ENCODE measurements at regions of chr19 and their contacts with region 1.

Region 1: GRCh38 chr19:41353466-41354342 is at the start of gene TGFB1:
- DNase-seq: peak; percentile 89 to 98 (median 94)
- ATAC-seq: peak; percentile 60
- H3K4me3 ChIP-seq: peak within 1 kb of the TSS; percentile 99
- H3K4me3 Mint-ChIP-seq: peak within 1 kb of the TSS; percentile 94
- H3K27ac ChIP-seq: peak within 1 kb of the TSS; percentile 82 to 94
- H3K27ac Mint-ChIP-seq: peak within 1 kb of the TSS; percentile 93
- H3K4me1 ChIP-seq: peaks cover 72% of the 10 kb centered on the region
- H3K4me1 Mint-ChIP-seq: peaks cover 81% of the 10 kb centered on the region
- H3K27me3 ChIP-seq: no peaks in the 10 kb centered on the region
- H3K27me3 Mint-ChIP-seq: no peaks in the 10 kb centered on the region
- CTCF ChIP-seq: peak; percentile 80
- total RNA-seq, gene TGFB1: 406 to 416 TPM

Region 2: DNA sequence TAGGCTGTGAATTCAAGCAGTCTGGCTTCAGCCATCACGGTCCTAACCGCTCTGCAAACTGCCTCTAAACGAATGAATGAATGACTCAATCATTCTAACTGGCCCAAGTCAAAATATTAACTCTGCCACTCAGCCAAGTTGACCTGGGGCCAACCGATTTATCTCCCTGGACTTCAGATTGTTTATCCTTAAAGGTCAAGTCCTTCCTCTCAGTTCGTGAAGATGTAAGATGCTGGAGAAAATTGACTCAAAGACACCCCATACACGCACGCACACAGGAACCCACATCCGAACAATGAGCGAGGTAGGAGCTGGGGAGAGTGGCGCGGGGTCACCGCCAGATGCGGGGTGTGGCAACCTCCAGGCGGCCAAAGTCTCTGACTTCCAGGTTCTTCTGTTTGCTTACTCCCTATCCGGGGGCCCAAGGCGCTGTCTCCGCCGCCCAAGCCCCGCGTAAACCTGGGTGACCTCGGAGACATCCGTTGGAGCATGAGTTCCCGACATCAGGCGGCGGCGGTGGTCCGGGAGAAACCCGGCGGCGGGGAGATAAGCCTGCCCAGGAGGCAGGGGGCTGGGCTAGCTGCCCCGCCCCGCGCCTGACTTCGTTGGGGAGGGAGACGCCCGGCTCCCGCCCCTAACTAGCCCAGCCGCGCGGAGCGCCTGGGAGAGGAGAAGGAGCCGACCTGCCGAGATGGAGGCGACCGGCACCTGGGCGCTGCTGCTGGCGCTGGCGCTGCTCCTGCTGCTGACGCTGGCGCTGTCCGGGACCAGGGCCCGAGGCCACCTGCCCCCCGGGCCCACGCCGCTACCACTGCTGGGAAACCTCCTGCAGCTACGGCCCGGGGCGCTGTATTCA is 160.9 kb before region 1 on chr19 and contains the start of gene CYP2S1:
- CTCF ChIA-PET with region 1: no interaction called
- POLR2A ChIA-PET with region 1: no interaction called
- intact Hi-C with region 1: no loop called
- DNase-seq: peak in 6 of 14 experiments; percentile 4 to 46 (median 24)
- ATAC-seq: peak; percentile 55
- H3K4me3 ChIP-seq: peak within 1 kb of the TSS; percentile 16
- H3K4me3 Mint-ChIP-seq: peak within 1 kb of the TSS; percentile 61
- H3K27ac ChIP-seq: no peak within 1 kb of the TSS
- H3K27ac Mint-ChIP-seq: no peak within 1 kb of the TSS
- H3K4me1 ChIP-seq: peaks cover 21% of the 10 kb centered on the region
- H3K4me1 Mint-ChIP-seq: peaks cover 16% of the 10 kb centered on the region
- H3K27me3 ChIP-seq: peaks cover 27 to 28% of the 10 kb centered on the region in 2 experiments
- H3K27me3 Mint-ChIP-seq: peaks cover 48% of the 10 kb centered on the region
- CTCF ChIP-seq: no peak
- total RNA-seq, gene CYP2S1: 0.78 to 0.82 TPM

Region 3: DNA sequence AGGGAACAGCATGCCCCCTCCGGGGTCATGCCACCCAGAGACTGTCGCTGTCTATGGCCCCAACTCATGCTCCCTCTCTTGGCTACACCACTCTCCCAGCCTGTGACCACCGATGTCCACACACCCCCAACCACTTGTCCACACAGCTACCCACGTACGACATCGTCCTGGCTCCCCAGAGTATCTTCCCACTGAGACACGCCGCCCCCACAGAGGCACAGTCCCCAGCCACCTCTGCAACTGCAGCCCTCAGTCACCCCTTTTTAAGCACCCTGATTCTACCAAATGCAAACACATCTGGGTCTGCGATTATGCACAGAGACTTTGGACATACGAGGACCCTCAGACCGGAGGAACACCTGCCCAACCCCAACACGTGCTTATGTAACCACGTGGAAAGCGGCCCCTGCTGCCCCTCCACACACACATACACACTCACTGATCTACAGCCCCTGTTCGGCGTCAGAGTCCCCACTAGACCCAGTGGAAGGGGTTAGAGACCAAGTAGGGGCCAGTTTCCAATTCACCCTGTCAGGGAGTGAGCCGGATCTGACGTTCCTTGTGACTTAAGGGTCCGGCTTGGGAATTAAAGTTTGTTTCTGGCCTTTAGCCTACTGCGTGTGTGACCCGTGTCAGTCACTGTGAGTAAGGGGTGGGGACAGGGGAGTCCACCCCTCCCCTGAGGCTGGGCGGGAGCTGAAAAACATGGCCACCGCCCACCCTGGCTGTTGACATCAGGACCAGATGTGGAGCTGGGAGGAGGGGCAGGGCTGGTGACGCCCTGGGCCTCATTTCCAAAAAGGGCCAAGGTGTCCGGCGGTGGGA is 146.6 kb before region 1 on chr19:
- CTCF ChIA-PET with region 1: interaction called, 3 read pairs
- POLR2A ChIA-PET with region 1: interaction called, 3 read pairs
- intact Hi-C with region 1: loop called (anchors 1 to 5 kb)
- DNase-seq: no peak
- ATAC-seq: no peak
- H3K4me3 ChIP-seq: no peak overlapping the region
- H3K4me3 Mint-ChIP-seq: no peak overlapping the region
- H3K27ac ChIP-seq: no peak overlapping the region
- H3K27ac Mint-ChIP-seq: peak overlapping the region; percentile 39
- H3K4me1 ChIP-seq: peaks cover 9% of the 10 kb centered on the region
- H3K4me1 Mint-ChIP-seq: no peaks in the 10 kb centered on the region
- H3K27me3 ChIP-seq: no peaks in the 10 kb centered on the region
- H3K27me3 Mint-ChIP-seq: no peaks in the 10 kb centered on the region
- CTCF ChIP-seq: no peak

Region 4: DNA sequence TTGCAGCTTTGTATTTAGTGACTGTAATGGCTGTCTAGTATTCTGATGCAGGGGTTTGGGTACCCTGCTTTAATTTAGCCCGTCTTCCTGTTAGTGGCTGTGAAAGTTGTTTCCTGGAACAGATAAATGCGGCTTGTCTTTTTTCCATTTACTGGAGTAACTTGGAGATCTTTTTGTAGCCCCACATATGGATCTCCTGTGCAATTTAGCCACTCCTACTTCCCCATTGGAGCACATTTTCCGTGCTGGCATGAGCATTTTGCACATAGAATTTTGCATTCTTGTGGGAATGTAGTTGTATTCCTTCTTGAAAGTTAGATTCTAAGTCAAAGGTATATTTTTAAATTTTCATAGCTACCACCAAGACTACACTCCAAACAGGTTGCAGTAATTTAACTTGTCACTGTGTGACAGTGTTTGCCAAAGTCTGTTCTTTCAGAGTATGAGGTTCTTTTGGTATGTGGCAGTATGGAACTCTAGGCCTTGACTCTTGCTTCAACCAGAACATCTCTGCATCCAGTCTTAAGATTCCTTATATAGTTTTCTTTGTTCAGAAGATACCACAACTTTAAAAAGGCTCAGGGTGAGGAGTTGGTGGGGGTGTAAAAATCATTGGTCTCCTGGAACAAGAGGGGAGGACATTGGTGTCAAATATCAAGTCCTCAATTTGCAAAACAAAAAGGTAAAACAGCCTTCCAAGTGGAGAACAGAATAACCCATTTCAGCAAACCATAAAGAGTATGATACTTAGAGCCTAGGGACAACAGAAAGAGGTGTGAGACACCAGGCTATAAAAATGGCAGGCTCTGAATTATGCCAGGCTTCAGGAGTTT is 64.8 kb before region 1 on chr19:
- CTCF ChIA-PET with region 1: no interaction called
- POLR2A ChIA-PET with region 1: no interaction called
- intact Hi-C with region 1: no loop called
- DNase-seq: peak in 1 of 14 experiments; percentile 33
- ATAC-seq: peak; percentile 38
- H3K4me3 ChIP-seq: no peak overlapping the region
- H3K4me3 Mint-ChIP-seq: no peak overlapping the region
- H3K27ac ChIP-seq: no peak overlapping the region
- H3K27ac Mint-ChIP-seq: no peak overlapping the region
- H3K4me1 ChIP-seq: peaks cover 2% of the 10 kb centered on the region
- H3K4me1 Mint-ChIP-seq: peaks cover 11% of the 10 kb centered on the region
- H3K27me3 ChIP-seq: no peaks in the 10 kb centered on the region
- H3K27me3 Mint-ChIP-seq: no peaks in the 10 kb centered on the region
- CTCF ChIP-seq: no peak

Region 5: DNA sequence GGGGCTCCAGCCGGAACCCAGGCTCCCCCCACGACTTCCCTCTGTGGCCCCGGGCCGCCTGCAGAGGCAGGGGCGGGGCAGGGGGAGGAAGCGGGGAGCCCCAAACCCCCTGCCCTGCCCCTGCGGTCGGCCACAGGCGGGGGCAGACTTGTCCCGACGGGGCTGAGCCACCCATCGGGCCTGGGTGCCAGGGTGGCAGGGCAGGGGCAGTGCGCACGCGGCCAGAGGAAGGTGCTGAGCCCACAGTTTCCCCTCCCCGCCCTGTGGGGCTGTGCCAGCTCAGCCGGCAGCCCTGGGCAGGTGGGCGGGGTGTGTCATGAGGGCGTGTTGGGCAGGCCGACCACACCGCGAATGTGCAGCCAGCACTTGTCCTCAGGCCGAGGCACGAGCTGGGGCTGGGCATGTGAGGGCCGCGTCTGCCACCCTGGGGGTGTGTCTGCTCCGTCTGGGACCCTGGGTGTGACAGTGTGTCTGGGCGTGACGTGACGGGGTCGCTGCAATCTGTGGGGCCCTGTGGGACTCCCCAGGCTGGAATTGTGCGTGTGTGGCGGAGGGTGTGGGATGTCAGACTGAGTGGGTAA is 26.0 kb before region 1 on chr19:
- CTCF ChIA-PET with region 1: interaction called, 30 read pairs
- POLR2A ChIA-PET with region 1: interaction called, 106 read pairs
- intact Hi-C with region 1: loop called (anchors 2 kb)
- DNase-seq: peak; percentile 47 to 97 (median 76)
- ATAC-seq: peak; percentile 65
- H3K4me3 ChIP-seq: peak overlapping the region; percentile 44
- H3K4me3 Mint-ChIP-seq: peak overlapping the region; percentile 82
- H3K27ac ChIP-seq: peak overlapping the region; percentile 74 to 89
- H3K27ac Mint-ChIP-seq: peak overlapping the region; percentile 97
- H3K4me1 ChIP-seq: peaks cover 99% of the 10 kb centered on the region
- H3K4me1 Mint-ChIP-seq: peaks cover 75% of the 10 kb centered on the region
- H3K27me3 ChIP-seq: no peaks in the 10 kb centered on the region
- H3K27me3 Mint-ChIP-seq: no peaks in the 10 kb centered on the region
- CTCF ChIP-seq: no peak

Region 6: GRCh38 chr19:41363753-41364523 is 10.2 kb after region 1 on chr19 and contains the start of gene B9D2:
- CTCF ChIA-PET with region 1: interaction called, 17 read pairs
- POLR2A ChIA-PET with region 1: interaction called, 148 read pairs
- intact Hi-C with region 1: no loop called
- DNase-seq: peak; percentile 97 to 99 (median 98)
- ATAC-seq: peak; percentile 92
- H3K4me3 ChIP-seq: peak within 1 kb of the TSS; percentile 66
- H3K4me3 Mint-ChIP-seq: peak within 1 kb of the TSS; percentile 94
- H3K27ac ChIP-seq: peak within 1 kb of the TSS; percentile 98 to 99
- H3K27ac Mint-ChIP-seq: peak within 1 kb of the TSS; percentile 98
- H3K4me1 ChIP-seq: peaks cover 35% of the 10 kb centered on the region
- H3K4me1 Mint-ChIP-seq: peaks cover 39% of the 10 kb centered on the region
- H3K27me3 ChIP-seq: no peaks in the 10 kb centered on the region
- H3K27me3 Mint-ChIP-seq: no peaks in the 10 kb centered on the region
- CTCF ChIP-seq: no peak
- total RNA-seq, gene B9D2: 21.1 to 26.8 TPM

Region 7: DNA sequence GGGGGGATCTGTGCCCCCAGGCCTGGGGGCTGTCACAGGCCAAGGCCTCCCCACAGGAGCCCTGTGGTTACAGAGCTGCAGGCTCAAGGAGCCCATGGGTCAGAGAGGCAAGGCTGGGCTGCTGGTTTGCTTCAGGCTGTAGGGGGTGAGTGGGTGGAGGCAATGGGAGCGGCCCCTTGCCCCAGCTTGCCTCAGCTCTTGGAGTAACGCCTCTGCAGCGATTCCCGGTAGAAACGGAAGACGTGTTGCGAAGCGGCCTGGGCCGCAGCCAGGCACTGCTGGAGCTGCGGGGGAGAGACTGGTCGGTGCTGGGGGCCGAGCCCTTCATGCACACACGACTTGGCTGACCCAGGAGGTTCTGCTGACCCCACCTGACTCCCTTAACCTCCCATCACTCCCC is 32.7 kb after region 1 on chr19:
- CTCF ChIA-PET with region 1: no interaction called
- POLR2A ChIA-PET with region 1: no interaction called
- intact Hi-C with region 1: no loop called
- DNase-seq: no peak
- ATAC-seq: no peak
- H3K4me3 ChIP-seq: no peak overlapping the region
- H3K4me3 Mint-ChIP-seq: no peak overlapping the region
- H3K27ac ChIP-seq: no peak overlapping the region
- H3K27ac Mint-ChIP-seq: no peak overlapping the region
- H3K4me1 ChIP-seq: no peaks in the 10 kb centered on the region
- H3K4me1 Mint-ChIP-seq: no peaks in the 10 kb centered on the region
- H3K27me3 ChIP-seq: no peaks in the 10 kb centered on the region
- H3K27me3 Mint-ChIP-seq: no peaks in the 10 kb centered on the region
- CTCF ChIP-seq: no peak

Region 8: GRCh38 chr19:41439441-41440222 is 85.9 kb after region 1 on chr19 and contains the start of gene DMAC2:
- CTCF ChIA-PET with region 1: interaction called, 3 read pairs
- POLR2A ChIA-PET with region 1: interaction called, 4 read pairs
- intact Hi-C with region 1: loop called in 1 of 2 experiments (anchors 5 kb)
- DNase-seq: peak; percentile 86 to 97 (median 93)
- ATAC-seq: peak; percentile 99
- H3K4me3 ChIP-seq: peak within 1 kb of the TSS; percentile 90
- H3K4me3 Mint-ChIP-seq: no peak within 1 kb of the TSS
- H3K27ac ChIP-seq: peak within 1 kb of the TSS; percentile 60 to 77
- H3K27ac Mint-ChIP-seq: no peak within 1 kb of the TSS
- H3K4me1 ChIP-seq: peaks cover 16% of the 10 kb centered on the region
- H3K4me1 Mint-ChIP-seq: no peaks in the 10 kb centered on the region
- H3K27me3 ChIP-seq: no peaks in the 10 kb centered on the region
- H3K27me3 Mint-ChIP-seq: peaks cover 13% of the 10 kb centered on the region
- CTCF ChIP-seq: peak; percentile 65
- total RNA-seq, gene DMAC2: 21.6 to 25.7 TPM